ENCODE measurements at regions of chr3 and their contacts with region 1.

Region 1: GRCh38 chr3:14178247-14179113 is at the starts of genes LSM3 and XPC:
- DNase-seq: peak; percentile 98
- H3K4me3 ChIP-seq: peak within 1 kb of the TSS; percentile 57 to 90 (median 81)
- H3K27ac ChIP-seq: peak within 1 kb of the TSS; percentile 70
- H3K4me1 ChIP-seq: peaks cover 10% of the 10 kb centered on the region
- H3K27me3 ChIP-seq: no peaks in the 10 kb centered on the region
- CTCF ChIP-seq: no peak
- POLR2A ChIP-seq: peak; percentile 95
- total RNA-seq, gene LSM3: 13.0 and 13.6 TPM in 2 replicates
- total RNA-seq, gene XPC: 36.7 and 36.8 TPM in 2 replicates

Region 2: GRCh38 chr3:13623099-13623654 is 555.3 kb before region 1 on chr3:
- CTCF ChIA-PET with region 1: no interaction called
- POLR2A ChIA-PET with region 1: no interaction called
- dilution Hi-C with region 1: no loop called
- intact Hi-C with region 1: no loop called
- DNase-seq: no peak
- H3K4me3 ChIP-seq: no peak overlapping the region
- H3K27ac ChIP-seq: no peak overlapping the region
- H3K4me1 ChIP-seq: no peaks in the 10 kb centered on the region
- H3K27me3 ChIP-seq: no peaks in the 10 kb centered on the region
- CTCF ChIP-seq: no peak
- POLR2A ChIP-seq: no peak

Region 3: GRCh38 chr3:13902648-13903238 is 275.7 kb before region 1 on chr3:
- CTCF ChIA-PET with region 1: no interaction called
- POLR2A ChIA-PET with region 1: no interaction called
- dilution Hi-C with region 1: no loop called
- intact Hi-C with region 1: no loop called
- DNase-seq: no peak
- H3K4me3 ChIP-seq: no peak overlapping the region
- H3K27ac ChIP-seq: no peak overlapping the region
- H3K4me1 ChIP-seq: no peaks in the 10 kb centered on the region
- H3K27me3 ChIP-seq: no peaks in the 10 kb centered on the region
- CTCF ChIP-seq: no peak
- POLR2A ChIP-seq: no peak

Region 4: GRCh38 chr3:14077310-14077709 is 101.2 kb before region 1 on chr3:
- CTCF ChIA-PET with region 1: no interaction called
- POLR2A ChIA-PET with region 1: no interaction called
- dilution Hi-C with region 1: no loop called
- intact Hi-C with region 1: no loop called
- DNase-seq: no peak
- H3K4me3 ChIP-seq: no peak overlapping the region
- H3K27ac ChIP-seq: no peak overlapping the region
- H3K4me1 ChIP-seq: no peaks in the 10 kb centered on the region
- H3K27me3 ChIP-seq: no peaks in the 10 kb centered on the region
- CTCF ChIP-seq: no peak
- POLR2A ChIP-seq: no peak

Region 5: GRCh38 chr3:14124615-14125190 is 53.8 kb before region 1 on chr3 and contains the starts of genes CHCHD4 and TMEM43:
- CTCF ChIA-PET with region 1: interaction called, 8 read pairs
- POLR2A ChIA-PET with region 1: interaction called, 37 read pairs
- dilution Hi-C with region 1: no loop called
- intact Hi-C with region 1: loop called (anchors 1 kb)
- DNase-seq: peak; percentile 99
- H3K4me3 ChIP-seq: peak within 1 kb of the TSS; percentile 66 to 90 (median 67)
- H3K27ac ChIP-seq: peak within 1 kb of the TSS; percentile 61
- H3K4me1 ChIP-seq: peaks cover 22% of the 10 kb centered on the region
- H3K27me3 ChIP-seq: no peaks in the 10 kb centered on the region
- CTCF ChIP-seq: peak in 1 of 2 donors; percentile 1
- POLR2A ChIP-seq: peak; percentile 58
- total RNA-seq, gene CHCHD4: 12.4 and 13.6 TPM in 2 replicates
- total RNA-seq, gene TMEM43: 69.6 and 80.6 TPM in 2 replicates

Region 6: DNA sequence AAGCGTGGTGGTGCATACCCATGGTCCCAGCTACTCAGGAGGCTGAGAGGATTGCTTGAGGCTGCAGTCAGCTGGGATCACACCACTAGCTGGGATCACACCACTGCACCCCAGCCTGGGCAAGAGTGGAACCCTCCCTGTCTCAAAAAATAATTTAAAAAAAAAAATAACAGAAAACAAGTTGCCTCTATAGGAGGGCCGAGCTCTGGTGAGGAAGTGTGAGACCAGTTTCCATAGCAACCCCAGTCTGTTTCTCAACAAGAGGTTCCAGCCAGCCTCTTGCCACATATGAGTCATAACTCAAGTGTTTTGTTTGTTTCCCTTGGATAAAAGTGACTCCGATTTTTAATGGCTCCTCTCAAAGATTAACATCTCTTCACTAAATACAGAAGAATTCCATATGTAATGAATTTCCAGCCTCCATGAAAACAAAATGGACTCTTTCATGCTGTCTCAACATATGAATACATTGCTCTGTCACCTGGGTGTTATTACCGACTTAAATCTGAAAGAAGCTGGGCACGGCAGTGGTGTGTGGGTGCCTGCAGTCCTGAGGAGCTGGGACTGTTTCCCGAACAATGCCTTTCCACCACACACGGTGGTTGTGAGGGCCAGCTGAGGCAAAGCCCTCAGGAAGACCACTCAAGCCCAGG is 33.9 kb before region 1 on chr3:
- CTCF ChIA-PET with region 1: interaction called, 10 read pairs
- POLR2A ChIA-PET with region 1: interaction called, 14 read pairs
- dilution Hi-C with region 1: no loop called
- intact Hi-C with region 1: loop called (anchors 1 kb)
- DNase-seq: peak; percentile 97
- H3K4me3 ChIP-seq: peak overlapping the region in 1 of 3 experiments; percentile 20
- H3K27ac ChIP-seq: peak overlapping the region; percentile 100
- H3K4me1 ChIP-seq: peaks cover 41% of the 10 kb centered on the region
- H3K27me3 ChIP-seq: no peaks in the 10 kb centered on the region
- CTCF ChIP-seq: no peak
- POLR2A ChIP-seq: peak; percentile 69

Region 7: GRCh38 chr3:15032650-15033049 is 854.2 kb after region 1 on chr3:
- CTCF ChIA-PET with region 1: no interaction called
- POLR2A ChIA-PET with region 1: no interaction called
- dilution Hi-C with region 1: no loop called
- intact Hi-C with region 1: no loop called
- DNase-seq: no peak
- H3K4me3 ChIP-seq: no peak overlapping the region
- H3K27ac ChIP-seq: no peak overlapping the region
- H3K4me1 ChIP-seq: no peaks in the 10 kb centered on the region
- H3K27me3 ChIP-seq: no peaks in the 10 kb centered on the region
- CTCF ChIP-seq: no peak
- POLR2A ChIP-seq: no peak